Activated T-helper 1 cell treated with anti-CD3 and anti-CD28 coated beads, Interleukin-12 subunit alpha, Interleukin-12 subunit beta, Interleukin-2, Interleukin-4 antibody, amounts not matched to agents 30 ng/mL and 10 ng/mL and 1 ng/mL, durations not matched to agents 14 hours and 24 hours and 36 hours (primary cell): ENCODE measurements at regions of chr1 and their contacts with region 1.

Region 1: GRCh38 chr1:111720274-111720976 is 18.8 kb downstream of the INKA2 start:
- DNase-seq: no peak
- H3K4me3 Mint-ChIP-seq: no peak overlapping the region
- H3K27ac Mint-ChIP-seq: peak overlapping the region; percentile 32
- H3K4me1 Mint-ChIP-seq: peaks cover 7% of the 10 kb centered on the region
- H3K27me3 Mint-ChIP-seq: no peaks in the 10 kb centered on the region

Region 2: DNA sequence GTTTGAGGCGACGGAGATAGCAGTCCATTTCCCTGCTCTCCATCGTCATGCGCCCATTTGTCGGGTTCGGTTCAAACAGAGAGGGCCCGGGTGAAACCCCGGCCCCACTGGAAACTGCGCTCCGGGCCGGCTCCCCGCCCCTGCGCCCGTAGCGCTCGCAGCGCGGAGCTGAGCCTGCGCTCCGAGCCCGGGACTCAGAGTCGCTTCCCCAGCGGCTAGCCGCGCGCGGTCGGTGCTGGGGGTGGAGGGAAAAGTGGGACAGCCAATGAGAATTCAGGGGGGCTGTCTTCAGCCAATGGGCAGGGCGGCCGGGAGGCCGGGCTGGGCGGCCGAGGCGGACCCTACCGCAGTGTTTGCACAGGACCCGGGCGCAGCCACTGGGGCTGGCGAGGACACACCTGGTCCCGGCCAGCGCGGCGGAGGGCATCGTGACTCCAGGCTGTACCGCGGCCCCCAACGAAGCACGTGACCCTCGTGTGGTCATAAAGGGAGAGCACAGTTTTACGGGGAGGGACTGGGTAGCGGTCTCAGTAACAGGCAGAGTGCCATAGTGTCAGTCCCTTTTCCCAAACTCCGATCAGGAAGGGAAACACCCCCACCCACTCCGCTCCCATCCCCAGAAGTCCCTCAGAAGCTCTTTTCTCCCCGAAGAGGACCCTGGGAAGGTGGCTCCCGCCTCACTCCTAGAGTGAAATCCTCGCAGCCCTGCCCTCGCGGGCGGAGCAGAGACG is 18.9 kb after region 1 on chr1 and contains the start of gene INKA2:
- intact Hi-C with region 1: loop called (anchors 2 kb)
- DNase-seq: peak; percentile 78
- H3K4me3 Mint-ChIP-seq: peak within 1 kb of the TSS; percentile 91
- H3K27ac Mint-ChIP-seq: peak within 1 kb of the TSS; percentile 70
- H3K4me1 Mint-ChIP-seq: peaks cover 17% of the 10 kb centered on the region
- H3K27me3 Mint-ChIP-seq: peaks cover 43% of the 10 kb centered on the region
- total RNA-seq, gene INKA2: 1.3 and 1.7 TPM in 2 replicates

Region 3: DNA sequence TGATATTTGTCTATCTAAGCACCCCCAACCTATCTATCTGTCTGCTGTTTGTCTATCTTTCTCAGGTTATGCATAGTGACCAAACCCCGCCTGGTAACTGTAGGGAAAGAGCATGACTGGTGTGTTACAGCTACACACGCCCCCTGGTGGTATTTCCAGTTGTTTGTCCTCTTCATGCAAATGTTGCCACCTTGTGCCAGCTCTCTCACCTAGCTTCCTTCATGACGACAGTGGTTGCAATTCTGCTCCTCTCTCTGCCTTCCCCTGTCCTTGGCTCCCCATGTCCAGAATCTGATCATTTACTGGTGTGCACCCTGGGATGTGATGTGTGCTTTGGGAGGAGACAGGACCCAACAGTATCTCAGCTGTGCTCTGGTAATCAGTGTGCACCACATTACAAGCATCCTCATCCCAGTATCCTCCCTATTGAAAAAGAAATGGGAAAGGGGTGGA is 26.9 kb after region 1 on chr1:
- intact Hi-C with region 1: loop called (anchors 1 kb)
- DNase-seq: peak; percentile 70
- H3K4me3 Mint-ChIP-seq: no peak overlapping the region
- H3K27ac Mint-ChIP-seq: no peak overlapping the region
- H3K4me1 Mint-ChIP-seq: peaks cover 14% of the 10 kb centered on the region
- H3K27me3 Mint-ChIP-seq: peaks cover 28% of the 10 kb centered on the region

Region 4: GRCh38 chr1:111769517-111770146 is 49.2 kb after region 1 on chr1:
- intact Hi-C with region 1: loop called (anchors 1 kb)
- DNase-seq: peak; percentile 14
- H3K4me3 Mint-ChIP-seq: no peak overlapping the region
- H3K27ac Mint-ChIP-seq: no peak overlapping the region
- H3K4me1 Mint-ChIP-seq: peaks cover 15% of the 10 kb centered on the region
- H3K27me3 Mint-ChIP-seq: no peaks in the 10 kb centered on the region